ENCODE measurements at regions of chr11 and their contacts with region 1.

Region 1: DNA sequence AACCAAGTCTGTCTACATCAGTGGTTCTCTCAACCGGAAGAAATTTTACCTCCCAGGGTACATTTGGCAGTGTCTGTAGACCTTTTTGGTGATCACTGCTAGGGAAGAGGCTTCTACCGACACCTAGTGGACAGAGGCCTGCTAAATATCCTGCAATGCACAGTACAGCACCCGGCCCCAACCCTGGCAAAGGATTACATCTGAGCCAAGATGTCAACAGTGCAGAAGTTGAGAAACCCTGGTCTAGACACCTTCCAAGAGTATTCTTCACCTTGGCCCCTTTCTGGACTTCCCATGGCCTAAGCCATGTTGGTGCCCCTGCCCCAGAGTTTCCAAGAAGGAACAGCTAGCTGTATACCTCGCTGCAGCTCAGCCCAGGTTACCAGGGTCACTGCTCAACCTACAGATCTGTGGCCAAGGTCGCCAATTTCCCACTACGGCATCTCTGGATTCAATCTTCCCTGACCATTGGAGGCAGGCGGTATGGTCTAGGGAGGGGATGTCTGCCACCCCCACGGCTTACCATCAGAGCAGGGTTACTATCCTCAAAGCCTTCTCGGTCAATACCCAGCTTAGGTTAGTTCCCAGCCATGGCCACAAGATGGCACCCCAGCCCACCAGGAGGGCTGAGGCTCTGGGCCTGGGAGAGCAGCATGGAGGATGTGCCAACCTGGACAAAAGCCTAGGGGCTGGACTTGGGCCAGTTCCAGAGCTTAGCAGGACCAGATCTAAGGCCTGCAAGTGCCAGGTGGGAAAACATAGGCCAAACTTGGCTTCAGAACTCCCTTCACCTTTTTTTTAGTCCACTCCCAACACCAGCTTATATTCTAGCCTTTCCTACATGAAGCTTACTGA is 3.7 kb upstream of the KCNC1 start:
- DNase-seq: no peak
- H3K4me3 ChIP-seq: no peak overlapping the region
- H3K27me3 ChIP-seq: peaks cover 17% of the 10 kb centered on the region
- CTCF ChIP-seq: peak; percentile 92

Region 2: DNA sequence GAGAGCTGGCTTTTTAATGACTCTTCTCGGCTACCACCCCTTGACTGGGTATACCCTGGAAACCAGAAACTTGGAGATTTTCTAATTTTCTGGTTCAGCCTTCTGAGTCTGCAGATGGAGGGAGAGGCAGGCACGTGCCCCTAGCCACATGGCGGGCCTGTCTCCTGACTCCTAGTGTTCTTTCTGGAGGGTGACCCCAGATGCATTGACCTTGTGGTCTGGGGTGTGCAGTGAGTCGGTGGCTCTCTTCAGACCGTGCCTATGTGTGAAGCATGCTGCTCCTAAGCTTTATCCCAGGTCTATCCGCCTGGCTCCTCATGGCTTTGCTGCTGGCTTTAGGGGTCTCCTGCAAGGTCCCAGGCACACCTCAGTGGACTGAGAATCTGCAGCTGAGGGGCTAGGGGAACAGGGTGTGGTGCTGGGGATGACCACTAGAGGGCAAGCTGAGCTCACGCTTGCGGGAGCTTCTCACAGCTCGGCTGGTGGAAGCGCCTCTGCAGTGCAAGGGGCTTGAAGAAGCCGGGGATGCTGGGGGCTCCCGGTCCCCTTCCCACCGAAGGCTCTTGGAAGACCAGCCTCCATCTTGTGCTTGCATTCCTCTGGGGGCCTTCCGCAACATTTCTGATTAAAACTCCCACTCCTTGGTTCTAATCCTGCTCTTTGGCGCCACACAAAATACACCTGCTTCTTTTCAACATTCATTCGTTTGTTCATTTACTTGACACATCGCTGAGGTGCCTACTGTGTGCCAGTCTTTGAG is 132.0 kb before region 1 on chr11:
- CTCF ChIA-PET with region 1: interaction called, 14 read pairs
- POLR2A ChIA-PET with region 1: no interaction called
- DNase-seq: no peak
- H3K4me3 ChIP-seq: no peak overlapping the region
- H3K27me3 ChIP-seq: no peaks in the 10 kb centered on the region
- CTCF ChIP-seq: peak; percentile 99

Region 3: DNA sequence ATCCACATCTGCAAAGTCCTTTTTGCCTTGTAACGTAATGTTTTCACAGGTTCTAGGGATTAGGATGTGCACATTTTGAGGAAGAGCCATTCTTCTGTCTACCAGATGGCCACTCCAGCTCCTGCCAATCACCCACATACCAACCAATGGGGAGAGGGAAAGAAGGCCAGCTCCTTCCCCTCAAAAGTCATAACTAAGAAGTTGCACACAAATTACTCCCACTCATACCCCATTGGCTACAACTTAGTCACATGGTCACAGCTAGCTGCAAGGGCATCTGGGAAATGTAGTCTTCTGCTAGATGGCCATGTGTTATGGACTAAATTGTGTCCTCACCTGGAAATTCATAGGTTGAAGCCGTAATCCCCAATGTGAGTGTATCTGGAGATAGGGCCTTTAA is 26.9 kb before region 1 on chr11:
- CTCF ChIA-PET with region 1: interaction called, 10 read pairs
- POLR2A ChIA-PET with region 1: no interaction called
- DNase-seq: no peak
- H3K4me3 ChIP-seq: no peak overlapping the region
- H3K27me3 ChIP-seq: no peaks in the 10 kb centered on the region
- CTCF ChIP-seq: no peak

Region 4: GRCh38 chr11:17713851-17714250 is 17.0 kb before region 1 on chr11:
- CTCF ChIA-PET with region 1: interaction called, 13 read pairs
- POLR2A ChIA-PET with region 1: no interaction called
- DNase-seq: no peak
- H3K4me3 ChIP-seq: no peak overlapping the region
- H3K27me3 ChIP-seq: peaks cover 14% of the 10 kb centered on the region
- CTCF ChIP-seq: no peak

Region 5: DNA sequence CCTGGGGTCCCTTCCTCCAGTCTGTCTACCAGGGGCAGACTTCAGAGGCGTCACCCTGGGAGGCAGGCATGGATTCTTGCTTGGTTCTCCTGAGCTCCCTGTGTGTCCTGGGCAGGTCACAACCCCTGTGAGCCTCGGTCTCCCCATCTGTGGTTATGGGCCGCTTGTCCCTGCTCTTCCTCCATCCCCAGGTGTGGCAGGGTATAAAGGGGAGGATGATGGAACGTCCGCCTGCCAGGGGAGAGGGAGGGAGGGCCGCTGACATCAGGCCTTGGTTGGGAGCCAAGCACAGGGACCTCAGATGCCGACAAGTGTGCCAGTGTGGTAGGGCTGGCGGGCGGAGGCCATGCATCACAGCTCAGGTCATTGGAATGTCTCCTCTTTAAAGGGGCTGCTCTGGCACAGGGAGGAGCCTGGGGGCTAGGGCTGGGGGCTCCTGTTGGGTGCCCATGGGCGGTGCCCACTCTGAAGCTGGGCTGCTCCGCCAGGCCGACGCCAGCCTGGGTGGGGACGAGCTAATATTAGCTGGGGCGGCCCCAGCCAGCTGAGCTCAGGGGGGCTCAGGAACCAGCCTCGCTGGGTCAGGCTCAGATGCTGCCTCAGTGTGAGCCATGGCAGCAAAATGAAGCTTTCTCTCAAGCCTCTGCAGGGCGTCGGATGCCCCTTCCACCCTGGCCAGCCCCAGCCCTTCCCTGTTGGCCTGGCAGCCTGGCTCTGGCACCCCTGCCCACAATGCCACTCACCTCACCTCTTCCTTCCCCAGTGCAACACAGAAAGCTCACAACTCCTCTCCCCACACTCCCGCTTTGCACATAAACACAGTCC is 16.5 kb after region 1 on chr11:
- CTCF ChIA-PET with region 1: interaction called, 19 read pairs
- POLR2A ChIA-PET with region 1: no interaction called
- DNase-seq: no peak
- H3K4me3 ChIP-seq: no peak overlapping the region
- H3K27me3 ChIP-seq: peaks cover 1% of the 10 kb centered on the region; the same call in 1 of the 2 replicates
- CTCF ChIP-seq: no peak

Region 6: DNA sequence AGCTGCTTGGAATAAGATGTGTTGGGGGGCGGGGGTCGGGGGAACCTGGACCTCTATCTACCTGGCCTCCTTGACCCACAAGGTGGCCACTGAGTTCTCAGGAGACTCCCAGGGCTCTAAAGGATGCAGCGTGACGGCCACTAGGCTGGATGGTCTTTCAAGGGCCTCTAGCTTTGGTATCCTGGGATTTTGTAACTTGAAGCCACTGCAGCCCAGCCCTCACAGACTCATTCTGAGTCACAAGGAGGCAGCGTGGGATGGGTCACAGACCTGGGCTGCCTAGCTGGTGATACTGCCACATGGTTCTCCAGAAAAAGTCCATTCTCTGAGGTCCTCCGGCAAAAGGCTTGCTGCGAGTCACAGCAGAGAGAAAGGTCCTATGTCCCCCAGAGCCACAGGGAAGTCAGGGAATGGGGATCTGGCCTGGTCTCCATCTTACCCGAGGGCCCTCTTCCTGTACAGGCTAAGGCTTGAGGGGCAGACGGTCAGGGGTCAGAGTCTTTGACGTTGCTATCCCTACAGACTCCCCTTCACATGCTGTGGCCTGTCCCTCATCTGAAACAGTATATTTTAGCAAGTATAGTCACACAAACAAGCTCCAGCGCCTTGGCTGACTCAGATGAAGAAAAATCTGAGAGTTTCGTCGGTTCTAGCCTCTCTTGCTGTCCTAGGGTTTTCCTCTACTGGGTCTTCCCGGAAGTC is 56.1 kb after region 1 on chr11:
- CTCF ChIA-PET with region 1: no interaction called
- POLR2A ChIA-PET with region 1: no interaction called
- DNase-seq: peak; percentile 35
- H3K4me3 ChIP-seq: no peak overlapping the region
- H3K27me3 ChIP-seq: no peaks in the 10 kb centered on the region
- CTCF ChIP-seq: no peak

Region 7: DNA sequence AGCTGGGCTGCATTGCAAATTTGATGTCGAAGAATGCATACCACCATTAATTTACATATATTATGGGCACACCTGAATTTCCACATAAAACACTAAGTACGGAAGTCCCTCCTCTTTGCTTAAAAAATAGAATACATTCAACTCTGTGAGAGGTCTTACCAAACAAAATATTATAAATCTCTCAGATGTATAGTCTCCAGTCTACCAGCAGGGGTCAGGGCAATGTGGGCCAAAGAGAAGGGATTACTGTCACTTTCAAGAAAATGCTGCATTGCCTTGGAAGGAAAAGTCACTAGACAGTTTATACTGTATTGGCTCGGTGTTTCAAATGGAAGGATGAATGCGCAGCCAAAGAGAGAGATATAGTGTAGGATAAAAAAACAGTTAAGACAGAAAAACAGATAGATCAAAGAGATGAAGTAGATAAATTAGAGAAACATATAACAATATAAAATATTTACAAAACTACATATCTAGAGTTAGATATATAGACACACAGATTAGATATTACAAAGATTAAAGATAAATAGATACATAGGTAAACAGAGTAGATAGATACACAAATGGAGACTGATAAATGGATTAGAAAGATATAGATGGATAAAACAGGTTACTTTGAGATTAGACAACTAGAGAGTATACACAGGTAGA is 261.1 kb after region 1 on chr11:
- CTCF ChIA-PET with region 1: interaction called, 533 read pairs
- POLR2A ChIA-PET with region 1: no interaction called
- DNase-seq: no peak
- H3K4me3 ChIP-seq: no peak overlapping the region
- H3K27me3 ChIP-seq: no peaks in the 10 kb centered on the region
- CTCF ChIP-seq: peak; percentile 89

Region 8: GRCh38 chr11:18056561-18057181 is 325.8 kb after region 1 on chr11:
- CTCF ChIA-PET with region 1: no interaction called
- POLR2A ChIA-PET with region 1: no interaction called
- DNase-seq: no peak
- H3K4me3 ChIP-seq: no peak overlapping the region
- H3K27me3 ChIP-seq: no peaks in the 10 kb centered on the region
- CTCF ChIP-seq: no peak

Region 9: GRCh38 chr11:18105802-18106574 is 375.2 kb after region 1 on chr11 and contains the start of gene SAAL1:
- CTCF ChIA-PET with region 1: interaction called, 11 read pairs
- POLR2A ChIA-PET with region 1: no interaction called
- DNase-seq: no peak
- H3K4me3 ChIP-seq: peak within 1 kb of the TSS; percentile 96
- H3K27me3 ChIP-seq: no peaks in the 10 kb centered on the region; the same call in 1 of the 2 replicates
- CTCF ChIP-seq: peak; percentile 75
- polyA plus RNA-seq, gene SAAL1: 8.9 and 13.3 TPM in 2 replicates